AG04450 (cell line): ENCODE measurements at regions of chr17 and their contacts with region 1.

Region 1: GRCh38 chr17:2084766-2085647 is 30.1 kb downstream of the HIC1 start:
- DNase-seq: peak; percentile 65
- H3K4me3 ChIP-seq: no peak overlapping the region
- H3K27ac ChIP-seq: peak overlapping the region; percentile 73
- H3K27me3 ChIP-seq: no peaks in the 10 kb centered on the region
- CTCF ChIP-seq: no peak

Region 2: GRCh38 chr17:2070241-2071023 is 14.6 kb before region 1 on chr17:
- CTCF ChIA-PET with region 1: interaction called, 6 read pairs
- POLR2A ChIA-PET with region 1: interaction called, 11 read pairs
- DNase-seq: no peak
- H3K4me3 ChIP-seq: no peak overlapping the region
- H3K27ac ChIP-seq: peak overlapping the region; percentile 87
- H3K27me3 ChIP-seq: no peaks in the 10 kb centered on the region
- CTCF ChIP-seq: no peak

Region 3: GRCh38 chr17:2094891-2095535 is 10.0 kb after region 1 on chr17:
- CTCF ChIA-PET with region 1: interaction called, 6 read pairs
- POLR2A ChIA-PET with region 1: interaction called, 11 read pairs
- DNase-seq: no peak
- H3K4me3 ChIP-seq: no peak overlapping the region
- H3K27ac ChIP-seq: peak overlapping the region; percentile 21
- H3K27me3 ChIP-seq: no peaks in the 10 kb centered on the region
- CTCF ChIP-seq: peak; percentile 92

Region 4: DNA sequence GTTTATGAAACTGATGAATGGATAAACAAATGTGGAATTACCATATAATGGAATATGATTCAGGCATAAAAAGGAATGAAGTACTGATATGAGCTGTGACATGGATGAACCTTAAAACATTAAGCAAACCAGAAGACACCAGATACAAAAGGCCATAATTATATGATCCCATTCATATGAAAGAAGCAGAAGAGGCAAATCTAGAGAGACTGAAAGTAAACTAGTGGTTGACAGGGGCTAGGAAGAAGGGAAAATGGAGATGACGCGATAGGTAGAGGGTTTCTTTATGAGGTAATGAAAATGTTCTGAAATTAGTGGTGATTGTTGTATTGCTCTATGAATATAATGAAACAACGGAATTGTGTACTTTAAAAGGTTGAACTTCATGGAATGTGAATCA is 58.3 kb after region 1 on chr17:
- CTCF ChIA-PET with region 1: no interaction called
- POLR2A ChIA-PET with region 1: interaction called, 10 read pairs
- DNase-seq: no peak
- H3K4me3 ChIP-seq: no peak overlapping the region
- H3K27ac ChIP-seq: no peak overlapping the region
- H3K27me3 ChIP-seq: no peaks in the 10 kb centered on the region
- CTCF ChIP-seq: no peak